GM12878 (cell line): ENCODE measurements at regions of chr1 and their contacts with region 1.

Region 1: GRCh38 chr1:160768295-160768657 is 27.7 kb upstream of the LY9 start:
- DNase-seq: peak; percentile 84
- ATAC-seq: peak; percentile 94
- H3K4me3 ChIP-seq: peak overlapping the region; percentile 59
- H3K27ac ChIP-seq: peak overlapping the region; percentile 89
- H3K4me1 ChIP-seq: peaks cover 23% of the 10 kb centered on the region
- H3K27me3 ChIP-seq: no peaks in the 10 kb centered on the region
- CTCF ChIP-seq: peak; percentile 90 to 97 (median 91)
- EP300 ChIP-seq: no peak
- POLR2A ChIP-seq: no peak; the same call in 1 of the 2 replicates
- RAD21 ChIP-seq: peak; percentile 96

Region 2: DNA sequence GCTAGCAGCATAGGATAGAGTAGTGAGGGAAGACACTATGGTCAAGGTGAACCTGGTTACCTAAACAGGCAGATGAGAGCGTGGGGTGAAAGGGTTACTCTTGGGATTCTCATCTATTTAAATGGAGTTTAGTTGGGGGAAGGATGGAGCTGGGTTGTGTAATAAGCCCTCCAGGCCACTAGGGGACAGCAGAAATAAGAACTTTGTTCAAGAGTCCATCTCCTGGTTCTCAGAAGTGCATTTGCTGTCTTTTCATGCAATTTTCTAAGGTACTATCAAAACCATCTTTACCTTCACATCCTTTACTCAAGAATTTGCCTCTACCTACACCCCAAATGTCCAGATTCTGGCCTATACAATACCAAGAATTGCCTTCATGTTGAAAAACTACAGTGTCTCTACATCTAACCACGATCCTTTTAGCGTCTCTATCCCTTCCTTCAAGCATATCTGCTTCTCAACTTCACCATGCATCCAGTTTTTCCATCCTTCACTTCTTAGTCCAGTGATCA is 149.5 kb before region 1 on chr1:
- CTCF ChIA-PET with region 1: interaction called, 6 read pairs
- POLR2A ChIA-PET with region 1: no interaction called
- RAD21 ChIA-PET with region 1: interaction called, 4 read pairs
- SMC1A ChIA-PET with region 1: interaction called, 11 read pairs
- in situ Hi-C with region 1: no loop called
- intact Hi-C with region 1: no loop called
- DNase-seq: no peak
- ATAC-seq: peak; percentile 54
- H3K4me3 ChIP-seq: no peak overlapping the region
- H3K27ac ChIP-seq: no peak overlapping the region; the same call in 1 of the 2 replicates
- H3K4me1 ChIP-seq: peaks cover 28% of the 10 kb centered on the region
- H3K27me3 ChIP-seq: no peaks in the 10 kb centered on the region
- CTCF ChIP-seq: peak; percentile 72 to 88 (median 82)
- EP300 ChIP-seq: no peak
- POLR2A ChIP-seq: no peak
- RAD21 ChIP-seq: peak; percentile 75

Region 3: DNA sequence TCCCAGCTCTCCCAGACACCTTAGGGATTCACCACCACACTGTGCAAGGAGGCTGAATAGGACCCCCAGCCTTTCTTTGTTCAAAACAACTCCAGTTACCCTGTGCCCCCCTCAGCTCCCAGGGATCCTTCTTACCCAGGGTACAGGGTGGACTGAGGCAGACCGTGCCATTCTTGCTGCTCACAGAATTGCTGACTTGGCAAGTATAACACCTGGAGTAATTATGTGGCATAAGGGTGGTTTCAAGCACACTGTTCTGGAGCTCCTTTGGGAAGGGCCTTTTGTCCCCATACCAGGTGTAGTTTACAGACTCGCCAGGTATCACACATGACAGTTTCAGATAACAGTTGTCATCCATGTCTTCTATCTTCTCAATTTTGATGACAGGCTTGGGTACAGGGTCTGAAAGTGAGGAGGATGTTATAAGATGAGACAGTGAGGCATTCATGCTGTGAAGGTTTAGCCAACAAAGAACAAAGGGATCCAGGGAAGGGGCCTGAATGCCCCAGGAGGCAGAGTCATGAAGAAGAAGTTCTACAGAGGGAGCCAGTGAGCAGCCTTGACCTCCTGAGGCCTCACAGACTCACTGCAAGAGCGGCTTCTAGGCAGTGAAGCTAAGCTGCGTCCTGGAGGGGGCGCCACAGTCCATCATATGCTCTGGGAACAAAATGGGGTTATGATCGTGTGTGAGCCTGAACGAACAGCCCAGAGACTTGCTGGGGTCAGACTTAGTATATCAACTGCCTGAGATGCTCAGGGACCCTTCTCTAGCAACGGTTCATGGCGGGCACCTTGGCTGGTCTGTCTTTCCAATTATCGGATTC is 87.0 kb before region 1 on chr1:
- CTCF ChIA-PET with region 1: interaction called, 76 read pairs
- POLR2A ChIA-PET with region 1: interaction called, 9 read pairs
- RAD21 ChIA-PET with region 1: interaction called, 28 read pairs
- SMC1A ChIA-PET with region 1: interaction called, 54 read pairs
- in situ Hi-C with region 1: loop called (anchors 5 kb)
- intact Hi-C with region 1: loop called (anchors 1 kb)
- DNase-seq: no peak
- ATAC-seq: peak; percentile 89
- H3K4me3 ChIP-seq: no peak overlapping the region
- H3K27ac ChIP-seq: peak overlapping the region; percentile 14; the same call in 1 of the 2 replicates
- H3K4me1 ChIP-seq: peaks cover 38% of the 10 kb centered on the region
- H3K27me3 ChIP-seq: no peaks in the 10 kb centered on the region
- CTCF ChIP-seq: peak; percentile 85 to 97 (median 95); a peak in 5 of 6 replicates
- EP300 ChIP-seq: no peak
- POLR2A ChIP-seq: peak; percentile 61; the same call in 1 of the 2 replicates
- RAD21 ChIP-seq: peak; percentile 91

Region 4: GRCh38 chr1:160726498-160727315 is 41.6 kb before region 1 on chr1:
- CTCF ChIA-PET with region 1: interaction called, 209 read pairs
- POLR2A ChIA-PET with region 1: interaction called, 54 read pairs
- RAD21 ChIA-PET with region 1: interaction called, 137 read pairs
- SMC1A ChIA-PET with region 1: interaction called, 301 read pairs
- in situ Hi-C with region 1: loop called (anchors 5 kb)
- intact Hi-C with region 1: loop called (anchors 1 kb)
- DNase-seq: no peak
- ATAC-seq: peak; percentile 80
- H3K4me3 ChIP-seq: no peak overlapping the region
- H3K27ac ChIP-seq: peak overlapping the region; percentile 85
- H3K4me1 ChIP-seq: peaks cover 40% of the 10 kb centered on the region
- H3K27me3 ChIP-seq: no peaks in the 10 kb centered on the region
- CTCF ChIP-seq: peak; percentile 81 to 92 (median 91); a peak in 5 of 6 replicates
- EP300 ChIP-seq: no peak
- POLR2A ChIP-seq: no peak
- RAD21 ChIP-seq: peak; percentile 99

Region 5: DNA sequence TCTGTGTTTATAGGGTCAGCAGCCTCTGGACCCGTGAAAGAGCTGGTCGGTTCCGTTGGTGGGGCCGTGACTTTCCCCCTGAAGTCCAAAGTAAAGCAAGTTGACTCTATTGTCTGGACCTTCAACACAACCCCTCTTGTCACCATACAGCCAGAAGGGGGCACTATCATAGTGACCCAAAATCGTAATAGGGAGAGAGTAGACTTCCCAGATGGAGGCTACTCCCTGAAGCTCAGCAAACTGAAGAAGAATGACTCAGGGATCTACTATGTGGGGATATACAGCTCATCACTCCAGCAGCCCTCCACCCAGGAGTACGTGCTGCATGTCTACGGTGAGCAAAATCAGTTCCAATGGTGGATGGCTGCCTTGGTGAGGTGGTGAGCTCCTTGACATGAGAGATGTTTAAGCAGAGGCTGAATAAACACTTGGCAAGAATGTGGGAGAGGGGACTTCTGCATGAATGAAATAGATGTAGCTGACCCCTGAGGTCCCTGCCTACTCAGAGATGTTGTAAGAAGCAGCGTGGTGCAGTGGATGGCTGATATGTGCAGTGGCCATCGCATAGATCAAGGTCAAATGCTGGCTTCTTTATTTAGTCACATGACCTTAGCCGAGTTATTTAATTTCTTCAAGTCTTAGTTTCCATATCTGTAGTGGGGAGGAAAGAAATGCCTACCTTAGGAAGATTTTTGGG is 19.9 kb before region 1 on chr1:
- CTCF ChIA-PET with region 1: interaction called, 234 read pairs
- POLR2A ChIA-PET with region 1: interaction called, 31 read pairs
- RAD21 ChIA-PET with region 1: interaction called, 151 read pairs
- SMC1A ChIA-PET with region 1: interaction called, 447 read pairs
- in situ Hi-C with region 1: no loop called
- intact Hi-C with region 1: loop called (anchors 1 kb)
- DNase-seq: no peak
- ATAC-seq: no peak
- H3K4me3 ChIP-seq: no peak overlapping the region
- H3K27ac ChIP-seq: no peak overlapping the region
- H3K4me1 ChIP-seq: peaks cover 51% of the 10 kb centered on the region
- H3K27me3 ChIP-seq: no peaks in the 10 kb centered on the region
- CTCF ChIP-seq: peak; percentile 18 to 47 (median 38); a peak in 4 of 6 replicates
- EP300 ChIP-seq: no peak
- POLR2A ChIP-seq: no peak; the same call in 1 of the 2 replicates
- RAD21 ChIP-seq: no peak

Region 6: DNA sequence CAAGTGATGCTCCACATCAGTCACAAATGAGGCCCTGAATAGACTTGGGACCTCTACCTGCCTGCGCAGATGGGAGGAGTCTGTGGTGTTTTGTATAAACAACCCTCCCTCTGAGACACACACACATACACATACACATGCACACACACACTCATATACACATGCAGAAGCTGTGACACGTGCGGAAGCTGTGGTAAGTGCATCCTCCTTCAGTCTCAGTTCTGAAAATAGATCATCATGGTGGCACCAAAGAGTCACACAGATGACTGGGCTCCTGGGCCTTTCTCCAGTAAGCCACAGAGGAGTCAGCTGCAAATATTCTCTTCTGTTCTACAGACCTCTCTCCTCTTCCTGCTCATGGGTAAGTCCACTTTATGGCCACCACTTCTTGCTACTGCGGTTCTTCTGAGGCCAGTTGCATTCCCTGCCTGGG is 27.7 kb after region 1 on chr1 and contains the start of gene LY9:
- CTCF ChIA-PET with region 1: interaction called, 192 read pairs
- POLR2A ChIA-PET with region 1: interaction called, 9 read pairs
- RAD21 ChIA-PET with region 1: interaction called, 49 read pairs
- SMC1A ChIA-PET with region 1: interaction called, 86 read pairs
- in situ Hi-C with region 1: no loop called
- intact Hi-C with region 1: no loop called
- DNase-seq: peak; percentile 97
- ATAC-seq: peak; percentile 79
- H3K4me3 ChIP-seq: peak within 1 kb of the TSS; percentile 63
- H3K27ac ChIP-seq: peak within 1 kb of the TSS; percentile 78
- H3K4me1 ChIP-seq: peaks cover 42% of the 10 kb centered on the region
- H3K27me3 ChIP-seq: no peaks in the 10 kb centered on the region
- CTCF ChIP-seq: no peak
- EP300 ChIP-seq: peak; percentile 96 to 98
- POLR2A ChIP-seq: peak; percentile 66
- RAD21 ChIP-seq: no peak
- polyA plus RNA-seq, gene LY9: 2.7 to 2.8 TPM

Region 7: GRCh38 chr1:160884579-160884978 is 116.3 kb after region 1 on chr1:
- CTCF ChIA-PET with region 1: no interaction called
- POLR2A ChIA-PET with region 1: no interaction called
- RAD21 ChIA-PET with region 1: no interaction called
- SMC1A ChIA-PET with region 1: no interaction called
- in situ Hi-C with region 1: no loop called
- intact Hi-C with region 1: no loop called
- DNase-seq: no peak
- ATAC-seq: peak; percentile 65
- H3K4me3 ChIP-seq: no peak overlapping the region
- H3K27ac ChIP-seq: no peak overlapping the region
- H3K4me1 ChIP-seq: no peaks in the 10 kb centered on the region
- H3K27me3 ChIP-seq: no peaks in the 10 kb centered on the region
- CTCF ChIP-seq: peak; percentile 10 to 54 (median 40); a peak in 3 of 6 replicates
- EP300 ChIP-seq: no peak
- POLR2A ChIP-seq: no peak
- RAD21 ChIP-seq: peak; percentile 41